ENCODE measurements at regions of chr7 and their contacts with region 1.

Region 1: GRCh38 chr7:148884299-148885022 is 370 bp upstream of the EZH2 start:
- DNase-seq: peak; percentile 56
- ATAC-seq: peak; percentile 94
- H3K4me3 ChIP-seq: peak overlapping the region; percentile 93
- H3K27ac ChIP-seq: peak overlapping the region; percentile 72
- H3K4me1 ChIP-seq: no peaks in the 10 kb centered on the region
- H3K27me3 ChIP-seq: no peaks in the 10 kb centered on the region
- CTCF ChIP-seq: no peak
- EP300 ChIP-seq: no peak
- POLR2A ChIP-seq: peak; percentile 88
- RAD21 ChIP-seq: no peak

Region 2: DNA sequence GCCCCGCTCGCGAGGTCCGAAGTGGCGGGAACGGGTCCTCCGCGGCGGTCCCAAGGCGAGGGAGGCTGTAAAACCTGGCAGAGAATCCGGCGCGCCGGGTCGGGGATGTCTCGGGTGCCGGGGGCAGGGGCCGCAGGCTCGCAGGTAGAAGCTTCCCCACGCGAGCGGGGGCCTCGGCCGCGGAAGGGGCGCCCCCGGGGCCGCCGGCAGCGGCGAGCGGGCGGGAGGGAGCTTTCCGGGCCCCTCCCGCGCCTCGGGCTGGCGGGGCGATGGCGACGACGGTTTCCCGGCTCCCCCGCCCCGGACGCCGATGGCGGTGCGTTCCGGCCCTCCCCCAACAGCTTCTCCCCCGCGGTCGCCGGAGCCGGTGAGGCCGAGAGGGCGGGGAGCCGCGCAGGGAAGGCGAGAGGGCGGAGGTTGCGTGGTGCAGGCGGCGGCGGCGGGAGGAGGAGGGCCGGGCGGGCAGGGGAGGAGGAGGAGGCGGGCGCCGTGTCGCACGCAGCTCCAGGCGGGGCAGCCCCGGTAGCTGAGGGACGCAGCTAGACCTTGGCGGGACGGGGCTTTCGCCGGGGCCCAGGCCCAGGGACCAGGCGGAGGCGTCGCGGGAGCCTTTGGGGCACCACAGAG is 186.0 kb before region 1 on chr7 and contains the start of gene CUL1:
- CTCF ChIA-PET with region 1: no interaction called
- POLR2A ChIA-PET with region 1: interaction called, 4 read pairs
- RAD21 ChIA-PET with region 1: no interaction called
- SMC1A ChIA-PET with region 1: no interaction called
- in situ Hi-C with region 1: no loop called
- intact Hi-C with region 1: loop called (anchors 10 kb)
- DNase-seq: no peak
- ATAC-seq: peak; percentile 82
- H3K4me3 ChIP-seq: peak within 1 kb of the TSS; percentile 94
- H3K27ac ChIP-seq: peak within 1 kb of the TSS; percentile 79
- H3K4me1 ChIP-seq: peaks cover 9% of the 10 kb centered on the region
- H3K27me3 ChIP-seq: no peaks in the 10 kb centered on the region
- CTCF ChIP-seq: no peak
- EP300 ChIP-seq: no peak
- POLR2A ChIP-seq: peak; percentile 83
- RAD21 ChIP-seq: no peak
- polyA plus RNA-seq, gene CUL1: 13.3 to 21.4 TPM

Region 3: GRCh38 chr7:148856891-148857290 is 27.6 kb before region 1 on chr7:
- CTCF ChIA-PET with region 1: interaction called, 6 read pairs
- POLR2A ChIA-PET with region 1: interaction called, 11 read pairs
- RAD21 ChIA-PET with region 1: interaction called, 4 read pairs
- SMC1A ChIA-PET with region 1: interaction called, 4 read pairs
- in situ Hi-C with region 1: no loop called
- intact Hi-C with region 1: loop called (anchors 2 kb)
- DNase-seq: no peak
- ATAC-seq: peak; percentile 76
- H3K4me3 ChIP-seq: no peak overlapping the region
- H3K27ac ChIP-seq: no peak overlapping the region
- H3K4me1 ChIP-seq: peaks cover 14% of the 10 kb centered on the region
- H3K27me3 ChIP-seq: no peaks in the 10 kb centered on the region
- CTCF ChIP-seq: no peak
- EP300 ChIP-seq: no peak
- POLR2A ChIP-seq: no peak
- RAD21 ChIP-seq: no peak

Region 4: DNA sequence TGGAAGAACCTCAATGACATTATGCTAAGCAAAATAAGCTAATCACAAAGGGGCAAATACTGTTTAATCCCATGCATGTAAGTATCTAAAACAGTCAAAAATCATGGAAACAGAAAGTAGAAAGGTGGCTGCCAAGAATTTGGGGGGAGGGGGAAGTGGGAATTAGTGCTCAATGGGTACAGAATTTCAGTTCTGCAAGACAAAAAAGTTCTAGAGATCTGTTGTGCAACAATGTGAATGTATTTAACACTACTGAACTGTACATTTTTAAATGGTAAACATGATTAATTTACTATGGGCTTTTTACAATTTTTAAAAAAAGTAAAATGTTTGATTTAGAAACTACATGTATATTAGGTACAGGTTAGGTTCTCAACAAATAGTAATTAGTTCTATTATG is 12.3 kb before region 1 on chr7:
- CTCF ChIA-PET with region 1: interaction called, 6 read pairs
- POLR2A ChIA-PET with region 1: interaction called, 14 read pairs
- RAD21 ChIA-PET with region 1: interaction called, 5 read pairs
- SMC1A ChIA-PET with region 1: interaction called, 8 read pairs
- in situ Hi-C with region 1: no loop called
- intact Hi-C with region 1: no loop called
- DNase-seq: no peak
- ATAC-seq: no peak
- H3K4me3 ChIP-seq: no peak overlapping the region
- H3K27ac ChIP-seq: no peak overlapping the region
- H3K4me1 ChIP-seq: peaks cover 28% of the 10 kb centered on the region
- H3K27me3 ChIP-seq: no peaks in the 10 kb centered on the region
- CTCF ChIP-seq: no peak
- EP300 ChIP-seq: no peak
- POLR2A ChIP-seq: no peak
- RAD21 ChIP-seq: no peak

Region 5: GRCh38 chr7:148940702-148941597 is 56.5 kb after region 1 on chr7:
- CTCF ChIA-PET with region 1: interaction called, 3 read pairs
- POLR2A ChIA-PET with region 1: interaction called, 8 read pairs
- RAD21 ChIA-PET with region 1: interaction called, 7 read pairs
- SMC1A ChIA-PET with region 1: interaction called, 4 read pairs
- in situ Hi-C with region 1: no loop called
- intact Hi-C with region 1: loop called (anchors 2 kb)
- DNase-seq: peak; percentile 49
- ATAC-seq: peak; percentile 90
- H3K4me3 ChIP-seq: peak overlapping the region; percentile 89
- H3K27ac ChIP-seq: peak overlapping the region; percentile 71
- H3K4me1 ChIP-seq: peaks cover 6% of the 10 kb centered on the region; the same call in 1 of the 2 replicates
- H3K27me3 ChIP-seq: no peaks in the 10 kb centered on the region
- CTCF ChIP-seq: no peak
- EP300 ChIP-seq: no peak
- POLR2A ChIP-seq: peak; percentile 83
- RAD21 ChIP-seq: 0 out of 2 replicates have a peak, but pooled peaks have one; percentile 2

Region 6: DNA sequence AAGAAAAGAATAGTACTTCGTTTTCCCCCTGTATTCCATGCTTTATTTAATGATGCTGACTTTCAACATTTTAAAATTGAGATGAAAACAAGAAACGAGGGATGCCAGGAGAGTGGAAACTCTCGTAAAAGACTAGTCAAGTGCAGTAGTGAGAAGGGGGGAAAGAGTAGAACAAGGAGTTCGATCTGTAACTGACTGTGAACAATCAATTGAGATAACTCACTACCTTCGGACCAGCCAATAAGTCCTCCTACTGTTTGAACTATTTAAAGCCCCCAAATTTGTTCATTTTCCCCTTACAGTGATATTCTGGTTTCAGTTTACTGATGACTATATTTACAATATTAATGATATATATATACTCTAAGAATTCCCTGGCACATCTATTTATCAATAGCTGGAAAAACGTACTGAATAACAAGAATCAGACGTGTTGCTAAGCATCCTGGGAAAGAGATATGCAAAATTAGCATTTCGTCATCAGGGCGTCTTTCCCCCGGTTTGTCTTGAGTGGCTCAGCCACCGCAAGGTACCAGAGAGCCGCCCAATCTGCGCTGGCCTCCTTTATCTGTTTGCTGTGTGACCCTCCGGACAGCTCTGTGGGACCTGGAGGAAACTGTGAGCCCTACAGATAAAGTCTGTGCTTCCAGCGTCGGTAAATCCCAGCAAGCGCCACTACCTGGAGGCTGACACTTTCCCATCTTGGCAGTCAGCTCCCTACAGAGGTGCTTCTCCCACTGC is 102.7 kb after region 1 on chr7:
- CTCF ChIA-PET with region 1: no interaction called
- POLR2A ChIA-PET with region 1: interaction called, 4 read pairs
- RAD21 ChIA-PET with region 1: no interaction called
- SMC1A ChIA-PET with region 1: interaction called, 3 read pairs
- in situ Hi-C with region 1: no loop called
- intact Hi-C with region 1: loop called (anchors 5 kb)
- DNase-seq: peak; percentile 78
- ATAC-seq: peak; percentile 96
- H3K4me3 ChIP-seq: peak overlapping the region; percentile 92
- H3K27ac ChIP-seq: peak overlapping the region; percentile 38
- H3K4me1 ChIP-seq: peaks cover 7% of the 10 kb centered on the region
- H3K27me3 ChIP-seq: no peaks in the 10 kb centered on the region
- CTCF ChIP-seq: no peak
- EP300 ChIP-seq: no peak
- POLR2A ChIP-seq: peak; percentile 55
- RAD21 ChIP-seq: no peak

Region 7: GRCh38 chr7:149028346-149029109 is 144.1 kb after region 1 on chr7 and contains the start of gene PDIA4:
- CTCF ChIA-PET with region 1: no interaction called
- POLR2A ChIA-PET with region 1: no interaction called
- RAD21 ChIA-PET with region 1: no interaction called
- SMC1A ChIA-PET with region 1: no interaction called
- in situ Hi-C with region 1: no loop called
- intact Hi-C with region 1: loop called (anchors 5 kb)
- DNase-seq: peak; percentile 96
- ATAC-seq: peak; percentile 94
- H3K4me3 ChIP-seq: peak within 1 kb of the TSS; percentile 79
- H3K27ac ChIP-seq: peak within 1 kb of the TSS; percentile 84
- H3K4me1 ChIP-seq: no peaks in the 10 kb centered on the region
- H3K27me3 ChIP-seq: no peaks in the 10 kb centered on the region
- CTCF ChIP-seq: peak in 2 of 3 experiments; percentile 11 to 14; a peak in 2 of 6 replicates
- EP300 ChIP-seq: no peak
- POLR2A ChIP-seq: peak; percentile 86
- RAD21 ChIP-seq: no peak
- polyA plus RNA-seq, gene PDIA4: 7.1 to 13.4 TPM

Region 8: DNA sequence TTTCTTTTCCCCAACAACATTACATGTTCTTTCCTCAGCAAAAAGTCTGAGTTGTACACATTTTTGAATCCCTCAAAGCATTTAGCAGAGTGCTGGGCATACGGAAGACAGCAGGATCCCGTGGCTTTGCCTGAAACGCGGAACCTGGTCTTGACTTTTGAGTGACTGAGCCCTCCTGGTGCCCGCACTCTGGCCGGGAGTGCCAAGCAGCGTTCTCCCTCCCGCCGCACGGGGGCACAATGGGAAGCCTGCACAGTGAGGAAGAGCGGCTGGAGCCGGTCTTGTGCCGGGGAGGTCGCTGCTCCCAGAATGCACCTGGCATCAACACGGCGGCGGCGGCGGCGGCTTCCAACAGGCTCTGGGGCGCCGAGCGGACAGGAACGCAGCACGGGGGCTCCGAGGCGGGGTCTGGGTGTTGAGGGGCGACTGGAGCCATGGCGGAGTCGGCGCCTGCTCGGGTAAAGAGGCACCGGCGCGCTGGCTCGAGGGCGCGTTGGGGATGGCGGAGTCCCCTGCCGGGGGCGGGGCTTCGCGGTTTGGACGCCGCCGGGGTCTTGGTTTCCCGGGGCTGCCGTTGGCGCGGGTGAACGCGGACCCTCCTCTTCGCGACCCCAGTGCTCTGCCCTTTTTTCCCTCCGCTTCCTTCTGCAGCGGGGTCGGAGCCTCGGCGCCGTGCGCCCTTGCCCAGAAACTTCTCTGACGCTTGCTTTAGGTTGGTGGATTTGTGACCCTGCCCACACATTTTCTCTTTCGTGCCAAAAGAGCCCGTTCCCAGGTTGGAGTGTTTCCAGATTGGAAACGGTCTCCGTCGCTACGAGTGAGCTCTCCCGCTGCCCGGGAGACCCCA is 355.1 kb after region 1 on chr7 and contains the start of gene ZNF212:
- CTCF ChIA-PET with region 1: no interaction called
- POLR2A ChIA-PET with region 1: no interaction called
- RAD21 ChIA-PET with region 1: no interaction called
- SMC1A ChIA-PET with region 1: no interaction called
- in situ Hi-C with region 1: no loop called
- intact Hi-C with region 1: no loop called
- DNase-seq: peak; percentile 56
- ATAC-seq: peak; percentile 99
- H3K4me3 ChIP-seq: peak within 1 kb of the TSS; percentile 99
- H3K27ac ChIP-seq: peak within 1 kb of the TSS; percentile 73
- H3K4me1 ChIP-seq: peaks cover 10% of the 10 kb centered on the region
- H3K27me3 ChIP-seq: no peaks in the 10 kb centered on the region
- CTCF ChIP-seq: peak; percentile 87 to 96 (median 92); a peak in 5 of 6 replicates
- EP300 ChIP-seq: no peak
- POLR2A ChIP-seq: peak; percentile 84
- RAD21 ChIP-seq: peak; percentile 51
- polyA plus RNA-seq, gene ZNF212: 1.2 to 2.1 TPM

Measured in GM12878 (cell line).